ENCODE measurements at regions of chr14 and their contacts with region 1.

Region 1: DNA sequence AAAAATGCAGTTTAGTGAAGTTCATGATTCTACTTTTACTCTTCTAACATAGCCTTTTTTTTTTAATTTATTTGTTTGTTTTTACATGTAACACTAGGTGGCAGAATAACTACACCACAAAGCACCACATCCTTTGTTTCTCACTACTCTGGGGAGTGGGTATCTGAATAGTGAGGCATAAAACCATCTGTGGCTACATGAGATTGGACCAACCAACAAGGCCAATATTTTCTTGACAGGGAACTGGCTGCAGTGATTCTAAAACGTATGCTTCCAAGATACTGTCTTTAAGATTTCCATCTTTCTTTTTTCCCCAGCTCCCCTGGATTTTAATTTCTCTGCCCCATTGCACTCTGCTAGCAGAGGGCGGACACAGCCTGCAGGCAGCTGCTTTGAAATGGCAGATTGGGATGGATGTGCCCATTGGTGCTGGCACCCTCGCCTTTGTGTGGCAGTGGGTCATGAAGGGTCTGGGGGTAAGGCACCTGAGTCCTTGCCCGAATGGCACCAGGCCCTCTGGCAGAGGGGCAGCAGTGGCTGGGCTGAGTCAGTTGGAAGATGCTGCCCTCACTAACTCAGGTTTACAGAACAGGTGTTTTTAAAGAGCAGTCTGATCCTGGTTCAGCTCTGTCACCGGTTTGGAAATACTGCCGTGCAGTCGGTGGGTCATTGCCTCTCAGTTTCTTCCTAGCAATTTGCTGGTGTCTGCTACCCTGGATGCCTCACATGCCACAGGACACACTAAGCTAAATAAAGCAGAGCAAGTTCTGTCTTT is 429.1 kb downstream of the RAD51B start:
- DNase-seq: no peak
- H3K4me3 ChIP-seq: no peak overlapping the region
- H3K27ac ChIP-seq: peak overlapping the region in 1 of 2 donors; percentile 79
- H3K4me1 ChIP-seq: peaks cover 70% of the 10 kb centered on the region
- H3K27me3 ChIP-seq: no peaks in the 10 kb centered on the region
- CTCF ChIP-seq: peak; percentile 20 to 70 (median 69)
- POLR2A ChIP-seq: no peak

Region 2: DNA sequence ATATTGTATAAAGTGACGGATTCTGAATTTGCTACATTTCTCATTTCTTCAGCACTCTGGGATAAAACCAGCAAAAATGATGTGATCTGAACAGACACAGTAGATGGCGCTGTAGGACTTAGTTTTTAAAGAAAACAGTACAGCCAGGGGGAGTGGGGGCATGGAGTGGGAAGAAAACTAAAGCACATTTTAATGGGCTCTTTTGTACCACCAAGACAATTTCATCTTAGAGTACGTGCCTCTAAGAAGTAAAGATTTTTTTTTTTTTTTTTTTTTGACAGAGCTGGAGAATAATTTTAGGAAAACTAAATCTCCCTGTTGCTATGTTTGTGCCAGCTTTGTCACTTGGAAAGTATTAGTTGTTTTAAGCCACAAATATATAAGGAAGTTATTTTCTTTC is 304.7 kb before region 1 on chr14:
- intact Hi-C with region 1: loop called (anchors 10 kb)
- DNase-seq: peak; percentile 92
- H3K4me3 ChIP-seq: no peak overlapping the region
- H3K27ac ChIP-seq: peak overlapping the region in 1 of 2 donors; percentile 48
- H3K4me1 ChIP-seq: peaks cover 4% of the 10 kb centered on the region
- H3K27me3 ChIP-seq: no peaks in the 10 kb centered on the region
- CTCF ChIP-seq: peak; percentile 68 to 94 (median 88)
- POLR2A ChIP-seq: no peak

Region 3: GRCh38 chr14:68788996-68789820 is 540.5 kb after region 1 on chr14:
- intact Hi-C with region 1: loop called (anchors 5 kb)
- DNase-seq: peak; percentile 89
- H3K4me3 ChIP-seq: peak overlapping the region; percentile 81 to 92
- H3K27ac ChIP-seq: peak overlapping the region; percentile 99 to 100
- H3K4me1 ChIP-seq: peaks cover 23% of the 10 kb centered on the region
- H3K27me3 ChIP-seq: no peaks in the 10 kb centered on the region
- CTCF ChIP-seq: peak; percentile 41 to 60 (median 55)
- POLR2A ChIP-seq: no peak

Region 4: DNA sequence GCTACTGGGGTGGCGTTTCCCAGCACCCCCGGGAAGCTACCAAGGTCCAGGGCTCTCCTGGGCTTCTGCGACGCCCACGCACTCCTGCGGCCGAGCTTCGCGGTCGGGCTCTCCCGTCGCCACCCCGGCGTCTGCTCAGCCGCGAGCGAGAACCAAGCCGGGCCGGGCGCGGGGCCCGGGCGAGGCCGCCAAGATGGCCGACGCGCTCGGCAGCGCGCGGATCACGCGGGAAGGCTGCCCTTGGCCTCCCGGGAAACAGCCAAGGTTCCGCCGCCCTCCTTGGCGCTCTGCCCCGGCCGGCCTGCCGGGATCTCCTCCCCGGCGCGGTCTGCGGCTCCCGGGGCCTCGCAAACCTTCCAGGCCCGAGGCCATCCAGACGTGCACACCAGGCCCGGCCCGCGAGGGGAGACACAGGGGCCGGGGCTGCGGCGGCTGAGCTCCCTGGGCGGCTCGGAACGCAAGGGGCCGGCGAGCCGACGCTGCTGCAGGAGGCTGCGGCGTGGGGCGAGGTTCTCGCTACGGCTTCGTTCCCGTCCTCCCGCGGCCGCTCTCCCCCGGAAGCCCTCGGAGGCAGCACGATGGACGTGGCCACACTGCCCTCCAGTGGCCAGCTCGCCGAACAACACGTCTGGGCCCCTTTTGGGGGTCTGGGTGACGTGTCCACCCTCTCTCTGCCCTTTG is 567.7 kb after region 1 on chr14:
- intact Hi-C with region 1: loop called (anchors 10 kb)
- DNase-seq: peak; percentile 91
- H3K4me3 ChIP-seq: peak overlapping the region; percentile 65
- H3K27ac ChIP-seq: peak overlapping the region; percentile 95
- H3K4me1 ChIP-seq: peaks cover 36% of the 10 kb centered on the region
- H3K27me3 ChIP-seq: no peaks in the 10 kb centered on the region
- CTCF ChIP-seq: peak; percentile 96 to 98 (median 98)
- POLR2A ChIP-seq: no peak